ENCODE measurements at regions of chr4 and their contacts with region 1.

Region 1: DNA sequence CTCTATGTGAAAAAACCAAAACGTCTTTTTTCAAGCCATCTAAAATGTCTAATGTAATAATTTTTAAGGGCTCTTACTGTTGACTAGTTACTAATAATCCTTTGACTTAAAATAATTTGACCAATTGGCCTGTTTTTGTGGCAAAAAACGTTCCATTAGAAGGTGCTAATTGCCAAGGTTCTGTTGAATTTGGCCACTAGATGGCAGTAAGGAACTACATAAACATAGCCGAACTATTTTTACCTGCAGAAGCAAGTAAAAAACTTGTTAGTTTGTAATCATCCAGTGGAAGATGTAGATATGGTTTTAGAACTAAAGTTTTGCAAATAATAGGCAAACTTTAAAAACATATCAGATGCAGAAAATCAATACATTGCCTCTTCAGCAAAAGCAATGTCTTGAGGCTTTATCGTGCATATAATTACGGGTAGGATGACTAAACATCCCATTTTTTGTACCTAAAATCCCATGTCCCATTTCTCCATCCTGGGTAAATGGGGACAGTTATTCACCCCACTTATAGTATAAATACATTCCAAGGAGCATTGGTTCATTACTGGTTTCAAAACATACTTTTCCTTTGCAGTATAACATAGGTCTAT is 57.6 kb downstream of the PROM1 start:
- DNase-seq: peak in 16 of 42 donors; percentile 12 to 76 (median 50)

Region 2: DNA sequence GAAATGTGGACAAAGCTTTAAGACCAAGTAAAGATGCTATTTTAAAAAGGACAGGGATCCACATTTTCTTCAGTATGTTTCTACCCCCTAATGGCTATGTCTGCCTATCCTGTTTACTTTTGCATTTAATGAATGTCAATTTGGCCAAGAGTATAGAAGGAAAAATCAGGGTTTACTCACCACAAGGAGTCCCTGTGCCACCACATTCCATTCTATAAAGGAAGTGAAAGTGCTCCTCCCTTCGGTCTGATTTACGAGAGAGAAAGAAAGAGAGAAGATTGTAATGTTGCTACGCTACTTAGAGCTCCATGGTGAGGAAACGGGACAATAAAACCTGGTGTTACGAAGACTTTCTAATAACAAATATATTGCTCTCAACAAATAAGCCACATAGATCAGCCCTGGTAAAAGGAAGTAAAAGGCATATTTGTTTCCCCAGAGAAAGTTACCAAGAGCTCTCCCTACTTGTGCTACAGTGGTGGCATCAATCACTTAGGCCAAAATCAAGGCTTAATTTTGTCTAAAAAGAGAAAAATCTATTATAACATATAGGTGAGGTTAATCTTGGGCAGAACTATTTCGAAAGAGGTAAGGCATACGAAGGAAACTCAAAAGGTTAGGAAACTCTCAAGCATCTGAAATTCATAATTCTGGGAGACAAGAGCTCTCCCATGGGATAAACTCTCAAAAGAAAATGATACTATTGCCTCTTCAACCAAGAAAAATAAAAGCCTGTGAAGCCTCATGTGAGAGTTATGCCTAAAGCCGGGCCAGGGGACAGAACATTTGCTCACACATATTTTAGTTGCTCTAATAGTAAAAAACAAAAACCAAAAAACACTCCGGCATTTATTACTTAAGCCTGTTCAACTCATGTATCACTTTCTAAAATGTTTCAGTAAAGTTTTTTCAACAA is 170.5 kb after region 1 on chr4:
- intact Hi-C with region 1: loop called (anchors 10 kb)
- DNase-seq: peak in 4 of 42 donors; percentile 20 to 44 (median 26)

Region 3: GRCh38 chr4:16264798-16265197 is 238.5 kb after region 1 on chr4:
- intact Hi-C with region 1: loop called (anchors 2 kb)
- DNase-seq: peak in 5 of 42 donors; percentile 5 to 32 (median 15)